Common myeloid progenitor, CD34-positive (primary cell): ENCODE measurements at regions of chr1 and their contacts with region 1.

Region 1: DNA sequence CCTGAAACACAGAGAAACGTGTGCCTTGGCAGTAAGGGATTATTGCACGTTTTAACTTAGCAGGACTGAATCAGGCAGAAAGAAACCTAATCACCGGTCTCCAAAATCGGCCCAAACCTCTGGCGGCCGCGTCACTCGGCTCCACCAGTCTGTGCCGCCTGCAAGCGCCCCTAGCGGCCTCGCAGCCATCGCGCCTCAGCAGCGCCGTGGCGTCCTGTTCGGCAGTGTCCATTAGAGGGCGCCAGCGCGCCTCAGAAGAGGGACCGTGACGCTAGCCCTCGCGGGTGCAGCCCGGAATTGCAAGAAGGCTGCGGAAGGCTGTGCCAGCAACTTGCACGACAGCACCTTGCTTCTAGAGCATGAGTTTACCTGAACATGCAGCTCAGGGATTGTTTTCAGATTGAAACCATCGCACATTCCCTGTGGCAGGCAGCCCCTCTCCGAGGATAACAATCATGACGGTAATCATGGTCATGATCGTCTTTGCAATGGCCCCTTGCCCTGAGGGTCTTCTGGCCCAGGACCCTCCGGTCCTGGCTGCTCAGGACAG is 164.4 kb downstream of the TRIM33 start:
- DNase-seq: peak; percentile 94 to 98 (median 96)
- H3K4me3 ChIP-seq: peak overlapping the region in 6 of 7 experiments; percentile 45 to 76 (median 54)
- H3K27ac ChIP-seq: no peak overlapping the region
- H3K4me1 ChIP-seq: peaks cover 8 to 28% (median 27%) of the 10 kb centered on the region in 4 experiments
- H3K27me3 ChIP-seq: peaks cover 0 to 46% (median 12%) of the 10 kb centered on the region in 5 experiments

Region 2: GRCh38 chr1:114369927-114370326 is 23.4 kb after region 1 on chr1:
- CTCF ChIA-PET with region 1: no interaction called
- POLR2A ChIA-PET with region 1: no interaction called
- DNase-seq: no peak
- H3K4me3 ChIP-seq: no peak overlapping the region
- H3K27ac ChIP-seq: no peak overlapping the region
- H3K4me1 ChIP-seq: peaks cover 0 to 4% (median 0%) of the 10 kb centered on the region in 4 experiments
- H3K27me3 ChIP-seq: no peaks in the 10 kb centered on the region

Region 3: DNA sequence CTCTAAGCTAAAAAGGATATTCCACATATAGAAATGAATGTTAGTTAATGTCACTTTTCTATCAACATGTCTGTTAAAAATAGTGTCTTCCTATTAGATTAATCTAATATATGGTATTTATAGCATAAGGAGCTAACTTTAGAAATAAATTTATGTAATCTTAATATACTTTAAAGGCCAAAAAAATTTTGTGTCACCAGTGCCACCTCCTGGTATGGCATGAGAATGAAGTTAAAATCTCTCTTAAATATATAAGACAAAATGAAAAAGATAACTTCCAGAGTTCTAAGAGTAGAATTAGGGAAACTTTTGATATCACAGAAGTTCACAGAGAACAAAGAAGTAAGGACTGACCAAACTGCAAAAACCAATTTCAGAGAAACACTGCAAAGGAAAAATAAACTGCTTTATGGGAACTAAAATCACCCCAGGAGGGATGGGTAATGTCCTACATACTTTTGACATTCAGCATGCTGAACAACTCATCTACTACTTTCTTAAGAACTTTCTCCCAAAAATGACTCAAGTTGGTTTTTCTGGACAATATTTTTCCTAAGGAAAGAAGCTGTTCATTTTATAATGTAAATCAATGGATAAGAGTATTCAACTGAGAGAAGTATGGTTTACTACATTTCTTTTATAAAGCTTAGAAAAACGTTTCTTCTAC is 81.7 kb after region 1 on chr1:
- CTCF ChIA-PET with region 1: interaction called, 16 read pairs
- POLR2A ChIA-PET with region 1: no interaction called
- DNase-seq: peak; percentile 22 to 60 (median 53)
- H3K4me3 ChIP-seq: no peak overlapping the region
- H3K27ac ChIP-seq: no peak overlapping the region
- H3K4me1 ChIP-seq: peaks cover 0 to 2% (median 0%) of the 10 kb centered on the region in 4 experiments
- H3K27me3 ChIP-seq: no peaks in the 10 kb centered on the region

Region 4: DNA sequence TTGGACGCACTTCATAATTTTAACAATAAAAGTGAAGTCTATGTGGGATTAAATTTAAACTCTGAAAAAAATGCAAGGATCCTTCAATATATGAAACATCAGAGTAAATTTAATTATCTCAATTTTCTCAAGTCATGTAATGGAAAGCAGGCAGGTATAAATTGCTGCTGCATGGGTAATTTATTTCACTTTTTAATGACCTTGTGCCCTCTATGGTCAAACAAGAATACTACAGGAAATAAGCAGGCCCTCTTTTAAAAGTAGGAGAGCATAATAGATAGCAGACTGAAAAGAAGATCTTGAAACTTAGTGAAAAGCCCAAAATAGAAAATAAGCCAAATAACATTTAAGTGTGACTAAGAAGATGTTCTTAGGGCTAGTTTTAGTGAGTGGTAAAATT is 212.0 kb after region 1 on chr1:
- CTCF ChIA-PET with region 1: interaction called, 11 read pairs
- POLR2A ChIA-PET with region 1: no interaction called
- DNase-seq: peak; percentile 16 to 38 (median 32)
- H3K4me3 ChIP-seq: no peak overlapping the region
- H3K27ac ChIP-seq: no peak overlapping the region
- H3K4me1 ChIP-seq: peaks cover 4 to 25% (median 9%) of the 10 kb centered on the region in 4 experiments
- H3K27me3 ChIP-seq: no peaks in the 10 kb centered on the region